Endothelial cell of umbilical vein (primary cell): ENCODE measurements at regions of chr21 and their contacts with region 1.

Region 1: GRCh38 chr21:15192243-15192642 is 127.4 kb upstream of the NRIP1 start:
- DNase-seq: no peak
- H3K4me3 ChIP-seq: no peak overlapping the region
- H3K27ac ChIP-seq: no peak overlapping the region
- H3K4me1 ChIP-seq: no peaks in the 10 kb centered on the region
- H3K27me3 ChIP-seq: no peaks in the 10 kb centered on the region
- CTCF ChIP-seq: no peak
- POLR2A ChIP-seq: no peak

Region 2: DNA sequence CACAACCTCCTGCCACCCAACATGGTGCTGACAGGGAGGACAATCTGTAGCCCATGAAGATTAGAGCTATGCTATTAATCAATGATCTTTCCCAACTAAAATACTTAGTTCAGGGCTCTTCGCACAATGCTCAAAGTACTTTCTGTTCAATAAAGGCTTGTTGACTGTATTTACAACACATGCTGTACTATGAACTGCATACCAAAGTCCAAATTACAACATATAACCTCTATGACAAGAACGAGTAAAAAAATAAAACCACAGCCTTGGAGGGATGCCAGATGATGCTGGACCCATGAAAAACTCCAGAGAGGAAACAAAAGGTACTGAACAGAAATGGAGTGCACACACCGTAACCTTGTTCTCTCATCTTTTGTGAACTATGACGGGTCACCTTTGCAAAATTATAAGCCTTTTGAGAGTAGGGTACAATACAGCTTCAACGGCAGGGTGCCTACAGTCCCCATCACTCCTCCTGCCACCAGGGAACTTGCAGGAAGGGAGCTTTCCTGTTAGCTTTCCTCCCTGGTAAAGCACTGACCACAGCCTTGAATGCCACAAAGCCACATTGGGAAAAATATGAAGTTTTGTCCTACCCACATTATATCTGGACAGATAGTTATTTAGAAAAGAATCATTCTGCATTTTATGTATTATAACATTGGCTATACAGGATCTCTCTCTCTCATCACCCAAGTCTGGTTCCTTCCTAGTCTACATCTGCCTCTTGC is 303.0 kb before region 1 on chr21:
- CTCF ChIA-PET with region 1: no interaction called
- POLR2A ChIA-PET with region 1: no interaction called
- dilution Hi-C with region 1: no loop called
- intact Hi-C with region 1: no loop called
- DNase-seq: no peak
- H3K4me3 ChIP-seq: no peak overlapping the region
- H3K27ac ChIP-seq: no peak overlapping the region
- H3K4me1 ChIP-seq: no peaks in the 10 kb centered on the region
- H3K27me3 ChIP-seq: no peaks in the 10 kb centered on the region
- CTCF ChIP-seq: no peak
- POLR2A ChIP-seq: no peak

Region 3: DNA sequence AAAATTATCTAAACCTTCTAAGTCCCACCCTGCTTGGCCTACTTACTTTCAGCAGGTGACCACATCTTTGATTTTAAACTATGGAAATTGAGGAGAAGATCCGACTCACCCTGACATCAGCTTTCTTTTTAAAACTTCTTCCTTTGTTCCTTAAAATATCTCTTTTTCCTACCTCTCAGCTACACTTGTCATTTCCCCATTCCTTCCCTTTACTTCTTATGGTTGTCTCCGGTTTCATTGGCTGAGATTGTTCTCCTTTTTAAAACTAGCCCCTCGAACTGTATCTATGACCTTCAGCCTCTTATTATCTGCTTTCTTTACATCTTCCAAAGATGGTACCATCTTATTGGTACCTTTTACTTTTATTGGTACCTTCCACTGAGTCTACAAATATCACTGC is 39.7 kb before region 1 on chr21:
- CTCF ChIA-PET with region 1: no interaction called
- POLR2A ChIA-PET with region 1: no interaction called
- dilution Hi-C with region 1: no loop called
- intact Hi-C with region 1: no loop called
- DNase-seq: no peak
- H3K4me3 ChIP-seq: no peak overlapping the region
- H3K27ac ChIP-seq: no peak overlapping the region
- H3K4me1 ChIP-seq: no peaks in the 10 kb centered on the region
- H3K27me3 ChIP-seq: no peaks in the 10 kb centered on the region
- CTCF ChIP-seq: no peak
- POLR2A ChIP-seq: no peak

Region 4: GRCh38 chr21:15252431-15252830 is 60.2 kb after region 1 on chr21:
- CTCF ChIA-PET with region 1: no interaction called
- POLR2A ChIA-PET with region 1: interaction called, 11 read pairs
- dilution Hi-C with region 1: no loop called
- intact Hi-C with region 1: no loop called
- DNase-seq: no peak
- H3K4me3 ChIP-seq: no peak overlapping the region
- H3K27ac ChIP-seq: no peak overlapping the region
- H3K4me1 ChIP-seq: peaks cover 2% of the 10 kb centered on the region
- H3K27me3 ChIP-seq: no peaks in the 10 kb centered on the region
- CTCF ChIP-seq: no peak
- POLR2A ChIP-seq: no peak